BJ (cell line): ENCODE measurements at regions of chr1 and their contacts with region 1.

Region 1: DNA sequence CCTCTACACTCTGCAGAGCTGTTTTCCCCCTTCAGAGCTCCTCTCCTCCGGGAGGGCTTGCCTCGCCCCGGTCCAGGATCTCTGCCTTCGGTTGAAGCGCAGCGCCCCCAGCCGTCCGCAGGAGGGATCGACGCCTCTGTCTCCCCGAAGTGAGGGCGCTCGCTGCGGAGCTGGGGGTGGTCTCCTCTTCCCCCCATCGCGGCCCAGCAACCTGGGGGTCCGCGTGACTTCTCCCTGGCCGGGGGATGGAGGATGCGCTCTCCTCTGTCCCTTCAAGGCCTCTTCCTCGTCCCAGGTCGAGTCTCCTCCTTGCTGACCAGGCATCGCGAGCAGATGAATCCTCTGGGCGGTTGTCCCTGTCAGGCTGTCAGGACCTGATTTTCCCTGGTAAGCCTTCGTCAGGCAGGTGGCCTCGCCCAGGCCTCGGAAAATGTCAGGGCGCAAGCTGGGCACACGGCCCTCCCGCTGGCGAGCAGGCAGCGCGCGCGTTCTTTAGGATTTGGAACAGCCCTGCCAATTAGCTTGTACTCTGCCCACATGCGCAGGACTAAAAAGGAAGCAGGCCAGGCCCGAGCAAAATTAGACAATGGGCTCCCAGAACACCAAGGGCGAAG is 90.5 kb downstream of the EDEM3 start:
- DNase-seq: no peak
- H3K4me3 ChIP-seq: peak overlapping the region; percentile 33
- H3K27me3 ChIP-seq: no peaks in the 10 kb centered on the region
- CTCF ChIP-seq: peak; percentile 96

Region 2: DNA sequence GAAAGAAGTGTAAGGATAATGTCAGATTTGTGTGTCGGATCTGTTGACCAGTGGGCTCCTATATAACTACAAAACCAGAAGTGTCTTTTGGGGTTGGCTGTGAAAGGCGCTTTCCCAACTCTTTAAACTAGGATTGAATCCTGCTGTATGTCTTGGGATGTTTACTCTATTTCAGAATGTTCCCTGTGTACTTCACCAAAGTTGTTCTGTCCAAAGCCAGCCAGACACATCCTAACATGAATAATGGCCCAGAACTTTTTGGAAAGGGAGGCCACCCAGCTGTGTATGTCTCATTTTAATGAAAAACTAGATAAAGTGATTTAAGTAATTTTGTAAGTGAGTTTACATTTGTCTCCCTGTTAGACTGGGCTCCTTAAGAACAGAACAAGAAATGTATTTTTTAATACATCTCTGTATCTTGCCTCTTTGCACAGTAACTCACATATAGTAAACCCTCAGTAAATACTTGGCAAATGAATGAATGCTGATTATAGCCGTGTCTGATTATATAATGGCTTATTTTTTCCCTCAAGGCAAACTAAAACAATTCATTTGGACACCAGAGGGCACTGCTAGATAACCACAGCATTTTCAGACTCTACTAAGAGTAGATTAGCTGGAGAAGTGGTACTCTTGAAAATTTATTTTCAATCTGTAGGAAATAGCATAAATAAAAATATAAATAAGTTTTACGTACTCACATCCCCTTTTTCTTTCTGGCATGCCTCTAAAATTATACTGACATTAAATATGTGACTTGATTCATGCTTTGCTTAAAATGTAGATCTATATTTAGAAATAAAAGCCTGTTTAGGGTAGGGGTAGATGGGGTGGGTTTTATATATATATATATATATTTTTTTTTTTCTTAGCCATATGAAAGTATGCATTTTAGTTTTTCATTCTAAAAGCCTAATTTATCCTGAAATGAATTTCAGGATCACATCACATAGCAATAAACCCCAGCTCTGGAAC is 588.8 kb before region 1 on chr1:
- CTCF ChIA-PET with region 1: interaction called, 33 read pairs
- POLR2A ChIA-PET with region 1: no interaction called
- DNase-seq: no peak
- H3K4me3 ChIP-seq: no peak overlapping the region
- H3K27me3 ChIP-seq: no peaks in the 10 kb centered on the region
- CTCF ChIP-seq: peak; percentile 60

Region 3: GRCh38 chr1:184242507-184242943 is 421.6 kb before region 1 on chr1:
- CTCF ChIA-PET with region 1: interaction called, 17 read pairs
- POLR2A ChIA-PET with region 1: no interaction called
- DNase-seq: peak; percentile 13
- H3K4me3 ChIP-seq: no peak overlapping the region
- H3K27me3 ChIP-seq: no peaks in the 10 kb centered on the region; the same call in 1 of the 2 replicates
- CTCF ChIP-seq: no peak

Region 4: GRCh38 chr1:184563308-184563707 is 100.8 kb before region 1 on chr1:
- CTCF ChIA-PET with region 1: interaction called, 14 read pairs
- POLR2A ChIA-PET with region 1: no interaction called
- DNase-seq: no peak
- H3K4me3 ChIP-seq: no peak overlapping the region
- H3K27me3 ChIP-seq: no peaks in the 10 kb centered on the region
- CTCF ChIP-seq: peak; percentile 54

Region 5: GRCh38 chr1:184649451-184649888 is 14.7 kb before region 1 on chr1:
- CTCF ChIA-PET with region 1: interaction called, 12 read pairs
- POLR2A ChIA-PET with region 1: no interaction called
- DNase-seq: peak; percentile 35
- H3K4me3 ChIP-seq: no peak overlapping the region
- H3K27me3 ChIP-seq: no peaks in the 10 kb centered on the region; the same call in 1 of the 2 replicates
- CTCF ChIP-seq: no peak

Region 6: DNA sequence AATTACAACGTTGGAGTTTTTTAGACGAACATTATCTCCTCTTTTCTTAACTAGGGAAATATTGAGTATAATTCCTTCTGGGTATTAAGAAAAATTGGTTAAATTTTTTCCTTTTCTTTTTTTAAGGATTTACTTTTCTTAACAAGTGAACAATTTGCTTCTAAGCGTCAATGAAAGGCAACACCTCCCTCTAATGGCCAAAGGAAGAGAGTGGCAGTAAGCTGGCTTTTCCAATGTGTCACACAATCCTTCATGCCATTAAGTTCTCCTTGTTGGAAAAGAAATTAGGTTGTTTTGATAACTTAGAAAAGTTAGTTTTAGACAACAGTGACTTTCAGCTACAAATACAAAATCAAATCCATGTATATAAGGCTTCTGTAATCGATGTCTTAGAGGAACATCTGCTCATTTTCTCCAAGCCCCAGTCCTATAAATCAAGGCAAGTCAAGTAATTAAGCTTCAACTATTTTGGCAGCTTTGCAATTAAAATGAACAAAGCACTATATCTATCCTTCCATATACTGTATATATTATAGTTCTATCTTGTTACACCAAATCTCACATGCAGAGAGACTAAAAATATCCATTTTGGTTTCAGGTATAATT is 27.7 kb after region 1 on chr1:
- CTCF ChIA-PET with region 1: interaction called, 14 read pairs
- POLR2A ChIA-PET with region 1: no interaction called
- DNase-seq: peak; percentile 23
- H3K4me3 ChIP-seq: no peak overlapping the region
- H3K27me3 ChIP-seq: no peaks in the 10 kb centered on the region
- CTCF ChIP-seq: peak; percentile 82